Mammary epithelial cell (primary cell): ENCODE measurements at regions of chr20 and their contacts with region 1.

Region 1: DNA sequence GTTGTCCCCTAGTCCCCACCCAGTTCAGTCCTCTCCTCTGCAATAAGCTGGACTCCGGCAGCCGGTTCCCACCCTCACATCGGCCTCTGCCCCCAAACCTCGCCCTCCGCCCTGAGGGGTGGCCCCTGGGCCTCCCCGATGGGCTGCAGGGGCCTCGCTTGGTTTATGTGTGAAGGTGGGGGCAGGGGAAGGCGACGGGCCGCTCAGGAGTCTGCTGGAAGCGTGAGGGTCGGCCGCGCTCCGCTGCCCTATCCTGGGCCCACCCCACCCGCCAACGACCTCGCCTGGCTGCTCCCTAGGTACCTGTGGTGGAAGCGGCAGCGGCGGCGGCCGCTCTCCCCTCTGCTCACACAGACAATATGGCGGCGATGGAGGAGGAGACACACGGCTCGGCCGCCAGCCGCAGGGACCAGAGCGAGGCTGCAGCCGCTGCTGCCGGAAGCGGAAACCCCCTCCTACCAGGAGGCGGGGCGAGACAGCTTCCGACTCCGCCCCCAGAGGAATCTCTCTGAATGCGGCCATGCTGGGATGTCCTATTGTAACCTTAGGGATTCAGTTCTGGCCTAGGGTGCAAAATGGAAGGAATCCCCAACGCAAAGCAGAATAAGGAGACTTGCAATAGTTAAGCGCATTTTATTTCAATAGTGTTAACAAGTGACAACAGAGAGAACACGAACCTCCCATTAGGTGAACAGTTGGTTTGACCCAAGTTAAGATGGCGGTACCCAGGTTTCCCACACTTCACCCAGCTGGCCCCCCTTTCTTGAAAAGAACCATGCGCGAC is at the start of gene CSNK2A1:
- DNase-seq: peak; percentile 92
- H3K4me3 ChIP-seq: peak within 1 kb of the TSS; percentile 70 to 100 (median 87)
- H3K27ac ChIP-seq: peak within 1 kb of the TSS; percentile 82
- H3K4me1 ChIP-seq: peaks cover 20% of the 10 kb centered on the region
- H3K27me3 ChIP-seq: no peaks in the 10 kb centered on the region
- CTCF ChIP-seq: no peak
- total RNA-seq, gene CSNK2A1: 153 to 183 TPM

Region 2: DNA sequence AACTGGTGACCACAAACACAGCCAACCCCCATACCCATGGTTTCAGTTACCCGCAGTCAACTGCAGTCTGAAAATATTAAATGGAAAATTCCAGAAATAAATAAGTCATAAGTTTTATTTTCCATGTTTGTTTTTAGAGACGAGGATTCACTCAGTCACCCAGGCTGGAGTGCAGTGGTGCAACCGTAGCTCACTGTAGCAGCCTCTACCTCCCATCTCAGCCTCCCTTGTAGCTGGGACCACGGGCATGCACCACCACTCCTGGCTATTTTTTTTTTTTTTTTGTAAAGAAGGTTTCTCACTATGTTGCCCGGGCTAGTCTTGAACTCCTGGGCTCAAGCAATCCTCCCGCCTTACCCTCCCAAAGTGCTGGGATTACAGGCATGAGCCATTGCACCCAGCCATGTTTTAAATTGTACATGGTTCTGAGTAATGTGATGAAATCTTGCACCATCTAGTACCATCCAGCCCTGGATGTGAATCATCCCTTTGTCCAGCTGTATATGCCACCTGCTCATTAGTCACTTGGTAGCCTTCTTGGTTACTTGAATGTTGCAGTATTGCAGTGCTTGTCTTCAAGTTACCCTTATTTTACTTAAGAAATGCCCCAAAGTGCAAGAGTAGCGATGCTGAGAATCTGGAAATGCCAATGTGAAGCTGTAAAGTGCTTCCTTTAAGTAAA is 14.5 kb before region 1 on chr20:
- CTCF ChIA-PET with region 1: no interaction called
- dilution Hi-C with region 1: no loop called
- in situ Hi-C with region 1: no loop called
- intact Hi-C with region 1: loop called (anchors 1 kb)
- DNase-seq: peak; percentile 93
- H3K4me3 ChIP-seq: no peak overlapping the region
- H3K27ac ChIP-seq: peak overlapping the region; percentile 82
- H3K4me1 ChIP-seq: peaks cover 16% of the 10 kb centered on the region
- H3K27me3 ChIP-seq: no peaks in the 10 kb centered on the region
- CTCF ChIP-seq: no peak

Region 3: DNA sequence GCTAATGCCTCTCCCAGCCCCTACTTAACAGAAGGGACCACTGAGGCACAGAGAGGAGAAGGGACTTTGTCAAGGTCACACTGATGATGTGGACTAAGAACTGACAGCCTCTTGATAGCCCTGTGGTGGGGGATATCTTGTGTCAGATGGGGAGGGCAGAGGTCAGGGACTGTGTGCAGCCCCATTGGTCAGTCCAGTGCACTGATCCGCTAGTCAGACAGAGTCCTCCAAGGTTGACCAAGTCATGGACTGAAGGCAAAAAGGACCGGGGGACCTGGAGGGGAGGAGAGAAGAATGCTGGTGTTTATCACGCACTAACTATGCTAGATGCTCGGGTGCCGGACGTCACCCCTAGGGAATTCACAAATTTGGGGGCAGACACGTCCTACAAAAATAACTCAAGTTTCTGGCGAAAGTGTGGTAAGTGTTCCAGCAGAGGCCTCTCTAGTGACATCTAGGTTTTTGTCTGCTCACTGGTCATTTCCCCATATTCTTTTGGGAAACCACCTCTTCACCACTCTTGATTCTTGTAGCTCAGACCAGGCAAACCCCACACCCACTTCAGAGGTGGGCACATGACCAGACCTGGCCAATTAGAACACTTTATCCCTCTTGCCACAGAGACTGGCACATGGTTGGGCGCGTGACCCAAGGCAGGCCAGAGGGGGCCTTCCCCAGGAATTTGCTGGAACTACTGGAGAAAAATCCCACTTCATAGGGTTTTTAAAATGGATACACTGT is 45.5 kb after region 1 on chr20:
- CTCF ChIA-PET with region 1: no interaction called
- dilution Hi-C with region 1: no loop called
- in situ Hi-C with region 1: no loop called
- intact Hi-C with region 1: no loop called
- DNase-seq: no peak
- H3K4me3 ChIP-seq: no peak overlapping the region
- H3K27ac ChIP-seq: no peak overlapping the region
- H3K4me1 ChIP-seq: no peaks in the 10 kb centered on the region
- H3K27me3 ChIP-seq: no peaks in the 10 kb centered on the region
- CTCF ChIP-seq: no peak

Region 4: GRCh38 chr20:653110-653589 is 109.6 kb after region 1 on chr20 and contains the start of gene SRXN1:
- CTCF ChIA-PET with region 1: no interaction called
- dilution Hi-C with region 1: no loop called
- in situ Hi-C with region 1: no loop called
- intact Hi-C with region 1: loop called (anchors 5 kb)
- DNase-seq: peak; percentile 93
- H3K4me3 ChIP-seq: peak within 1 kb of the TSS; percentile 77 to 81 (median 78)
- H3K27ac ChIP-seq: peak within 1 kb of the TSS; percentile 64
- H3K4me1 ChIP-seq: peaks cover 12% of the 10 kb centered on the region
- H3K27me3 ChIP-seq: no peaks in the 10 kb centered on the region
- CTCF ChIP-seq: peak; percentile 42 to 78
- total RNA-seq, gene SRXN1: 49.9 to 68.0 TPM